ENCODE measurements at regions of chr1 and their contacts with region 1.

Region 1: GRCh38 chr1:170967042-170967910 is 31.9 kb downstream of the MROH9 start:
- DNase-seq: peak; percentile 23
- H3K4me3 ChIP-seq: no peak overlapping the region
- H3K27ac ChIP-seq: no peak overlapping the region
- H3K27me3 ChIP-seq: no peaks in the 10 kb centered on the region
- CTCF ChIP-seq: peak; percentile 72

Region 2: DNA sequence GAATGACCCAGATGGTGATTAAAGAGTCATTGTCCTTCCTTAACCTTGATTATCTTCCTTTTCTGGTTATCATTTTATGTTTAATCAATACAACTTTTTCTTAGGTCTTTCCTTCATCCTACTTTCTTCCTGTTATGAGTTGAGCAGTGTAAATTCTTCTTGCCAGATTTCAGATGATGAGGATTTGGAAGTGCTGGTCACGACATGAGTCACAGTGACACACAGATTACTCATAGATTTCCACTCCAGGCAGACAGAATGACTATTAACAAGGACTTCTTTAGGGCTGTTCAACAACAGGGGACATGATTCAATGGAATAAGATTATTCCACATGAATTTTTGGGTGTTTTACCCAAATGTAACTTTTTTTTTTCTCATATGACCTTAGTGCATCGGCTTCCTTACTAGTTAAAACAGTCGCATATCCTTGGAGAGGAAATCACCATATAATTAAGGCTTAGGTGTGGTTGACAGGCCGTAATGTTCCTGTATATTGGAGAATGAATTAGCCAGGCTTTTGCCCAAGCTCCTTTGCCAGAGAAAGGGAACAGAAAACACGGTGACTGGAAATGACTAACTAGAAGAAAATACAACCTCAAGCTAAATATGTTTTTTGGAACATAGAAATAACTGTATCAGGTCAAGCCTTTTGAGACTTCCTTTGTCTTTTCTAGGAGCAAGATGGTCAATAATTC is 259.2 kb before region 1 on chr1:
- CTCF ChIA-PET with region 1: no interaction called
- POLR2A ChIA-PET with region 1: no interaction called
- DNase-seq: peak; percentile 78
- H3K4me3 ChIP-seq: no peak overlapping the region
- H3K27ac ChIP-seq: peak overlapping the region; percentile 62
- H3K27me3 ChIP-seq: no peaks in the 10 kb centered on the region
- CTCF ChIP-seq: no peak

Region 3: GRCh38 chr1:170917373-170917772 is 49.9 kb before region 1 on chr1:
- CTCF ChIA-PET with region 1: no interaction called
- POLR2A ChIA-PET with region 1: no interaction called
- DNase-seq: no peak
- H3K4me3 ChIP-seq: no peak overlapping the region
- H3K27ac ChIP-seq: no peak overlapping the region
- H3K27me3 ChIP-seq: no peaks in the 10 kb centered on the region
- CTCF ChIP-seq: no peak

Region 4: DNA sequence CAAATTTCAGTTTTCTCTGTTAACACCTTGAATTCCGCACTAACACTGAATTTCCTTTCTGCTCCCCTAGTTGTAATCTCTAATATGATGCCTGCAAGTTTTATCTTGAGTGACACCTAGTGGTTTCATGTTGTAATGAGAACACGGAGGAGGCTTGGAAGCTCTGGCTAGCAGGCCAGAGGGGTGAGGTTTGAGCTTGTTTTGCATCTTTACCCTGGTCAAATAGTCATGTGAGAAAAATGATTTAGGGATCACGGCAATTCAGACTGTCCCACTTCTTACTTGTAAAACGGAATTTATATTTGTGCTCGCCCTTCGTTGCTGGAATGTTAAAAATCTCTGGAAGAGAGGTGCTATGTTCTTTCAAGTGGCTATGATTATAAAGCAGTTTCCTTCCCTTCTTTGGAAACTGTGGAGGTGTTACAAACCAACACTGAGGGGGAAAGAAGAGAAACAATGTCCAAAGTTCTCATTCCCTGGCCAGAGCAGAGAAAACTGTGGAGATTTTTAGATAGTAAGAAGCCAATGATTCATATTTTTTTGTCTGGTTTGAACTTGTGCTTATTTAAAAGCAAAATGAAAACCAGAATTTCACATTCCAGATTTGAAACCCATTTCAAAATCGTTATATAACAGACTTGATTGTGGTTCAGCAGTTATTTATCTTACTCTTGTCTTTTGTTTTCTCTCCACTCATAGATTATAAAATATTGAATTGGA is 37.3 kb before region 1 on chr1:
- CTCF ChIA-PET with region 1: interaction called, 11 read pairs
- POLR2A ChIA-PET with region 1: no interaction called
- DNase-seq: peak; percentile 33
- H3K4me3 ChIP-seq: no peak overlapping the region
- H3K27ac ChIP-seq: no peak overlapping the region
- H3K27me3 ChIP-seq: no peaks in the 10 kb centered on the region
- CTCF ChIP-seq: peak; percentile 75

Region 5: GRCh38 chr1:170935231-170935630 is 32.0 kb before region 1 on chr1 and contains the start of gene MROH9:
- CTCF ChIA-PET with region 1: interaction called, 12 read pairs
- POLR2A ChIA-PET with region 1: no interaction called
- DNase-seq: no peak
- H3K4me3 ChIP-seq: no peak within 1 kb of the TSS
- H3K27ac ChIP-seq: no peak within 1 kb of the TSS
- H3K27me3 ChIP-seq: no peaks in the 10 kb centered on the region
- CTCF ChIP-seq: no peak
- polyA plus RNA-seq, gene MROH9: not detected in 2 replicates

Region 6: DNA sequence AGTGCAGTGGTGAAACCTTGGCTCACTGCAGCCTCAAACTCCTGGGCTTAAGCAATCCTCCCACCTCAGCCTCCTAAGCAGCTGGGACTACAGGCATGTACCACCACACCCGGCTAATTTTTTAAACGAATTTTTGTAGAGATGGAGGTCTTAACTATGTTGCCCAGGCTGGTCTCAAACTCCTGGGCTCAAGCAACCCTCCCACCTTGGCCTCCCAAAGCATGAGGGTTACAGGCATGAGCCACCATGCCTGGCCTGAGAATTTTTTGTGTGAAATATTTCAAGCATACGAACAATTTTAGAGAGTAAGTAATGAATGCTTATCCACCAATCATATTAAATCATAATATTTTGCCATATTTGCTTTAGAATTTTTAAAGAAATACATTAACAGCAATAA is 19.6 kb after region 1 on chr1:
- CTCF ChIA-PET with region 1: interaction called, 13 read pairs
- POLR2A ChIA-PET with region 1: no interaction called
- DNase-seq: no peak
- H3K4me3 ChIP-seq: no peak overlapping the region
- H3K27ac ChIP-seq: no peak overlapping the region
- H3K27me3 ChIP-seq: peaks cover 2% of the 10 kb centered on the region
- CTCF ChIP-seq: no peak

Region 7: DNA sequence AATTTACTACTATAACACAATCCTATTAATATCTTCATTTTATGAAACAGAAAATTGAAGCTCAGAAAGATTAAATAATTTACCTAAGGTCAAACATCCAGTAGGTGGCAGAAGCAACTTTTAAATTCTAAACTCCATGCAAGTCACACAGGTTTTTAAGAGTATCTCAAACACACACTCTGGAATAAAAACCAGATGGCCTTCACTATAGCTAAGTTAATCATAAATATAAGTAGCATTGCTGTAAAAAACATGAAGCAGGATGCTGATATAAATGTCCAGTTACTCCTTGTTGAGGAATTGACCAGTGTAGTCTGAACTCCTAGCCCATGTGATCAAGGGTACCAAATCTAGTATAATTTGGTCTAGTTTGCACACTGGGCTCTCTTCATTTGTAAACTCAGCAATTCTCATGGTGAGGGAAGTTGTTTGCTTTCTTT is 114.1 kb after region 1 on chr1:
- CTCF ChIA-PET with region 1: interaction called, 23 read pairs
- POLR2A ChIA-PET with region 1: no interaction called
- DNase-seq: peak; percentile 33
- H3K4me3 ChIP-seq: no peak overlapping the region
- H3K27ac ChIP-seq: no peak overlapping the region
- H3K27me3 ChIP-seq: no peaks in the 10 kb centered on the region
- CTCF ChIP-seq: peak; percentile 55

Region 8: DNA sequence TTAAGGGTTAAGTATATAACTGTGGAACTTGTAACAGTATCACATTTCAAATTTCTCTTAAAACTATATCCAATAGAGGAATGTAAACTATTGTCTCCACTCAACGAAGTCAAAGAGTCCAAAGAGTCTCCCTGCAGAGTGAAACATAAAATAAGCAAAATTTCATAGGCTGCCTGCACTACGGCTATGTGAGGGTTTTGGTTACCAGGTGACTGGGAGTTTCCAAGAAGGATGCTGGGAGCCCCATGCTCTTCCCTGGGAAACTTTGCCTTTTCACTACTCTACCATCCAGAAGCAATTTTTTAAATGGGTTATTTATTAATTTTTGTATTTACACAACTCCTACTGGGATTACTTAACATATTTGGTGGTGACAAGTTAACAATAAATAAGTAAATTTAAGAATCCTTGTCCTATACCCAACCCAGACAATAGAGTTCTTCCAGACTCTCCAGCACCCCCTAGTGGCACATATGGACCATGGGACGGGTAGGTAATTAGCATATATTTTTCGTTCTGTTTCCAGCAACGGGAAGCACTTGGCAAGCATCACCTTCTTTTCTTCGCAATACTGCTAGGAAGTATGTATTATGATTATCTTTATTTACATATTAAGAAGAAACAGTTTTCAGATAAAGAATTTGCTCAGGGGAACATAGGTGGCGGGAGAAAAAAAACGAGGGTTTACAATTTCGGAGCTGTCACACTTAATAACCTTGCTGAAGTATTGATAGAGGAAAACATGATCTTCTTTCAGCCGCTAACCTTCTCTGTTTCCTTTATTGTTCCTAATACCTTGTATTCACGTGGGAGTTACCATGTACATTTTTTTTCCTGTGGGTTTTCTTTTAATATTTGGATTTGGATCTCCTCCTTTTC is 221.4 kb after region 1 on chr1:
- CTCF ChIA-PET with region 1: interaction called, 13 read pairs
- POLR2A ChIA-PET with region 1: no interaction called
- DNase-seq: peak; percentile 20
- H3K4me3 ChIP-seq: no peak overlapping the region
- H3K27ac ChIP-seq: no peak overlapping the region
- H3K27me3 ChIP-seq: no peaks in the 10 kb centered on the region
- CTCF ChIP-seq: peak; percentile 77

Region 9: DNA sequence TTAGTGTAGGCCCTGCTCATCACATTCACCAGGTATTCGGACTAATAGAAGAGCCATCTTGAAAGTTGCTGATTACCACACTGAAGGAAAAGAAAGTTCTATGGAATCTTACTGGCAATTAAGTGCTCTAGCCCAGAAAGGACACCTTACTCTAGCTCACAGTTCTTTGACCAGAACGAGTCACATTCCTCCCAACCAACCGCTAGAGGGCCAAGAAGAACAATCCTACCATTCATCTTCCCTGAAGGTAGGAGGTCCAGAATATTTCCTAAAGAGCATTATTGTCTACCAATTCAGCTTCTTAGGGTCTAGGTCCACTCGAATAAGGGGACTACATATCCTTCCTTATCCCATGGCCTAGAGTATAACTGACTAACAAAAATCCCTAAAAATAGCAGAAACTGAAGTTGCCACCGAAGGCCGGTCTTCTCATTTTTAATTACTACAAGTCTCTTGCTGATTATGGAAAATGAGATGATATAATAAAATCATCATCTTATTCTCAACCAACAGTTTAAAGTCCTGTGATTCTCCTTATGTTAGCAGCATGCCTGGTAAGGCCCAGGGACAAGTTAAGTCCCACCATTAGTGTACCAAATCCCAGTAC is 278.3 kb after region 1 on chr1:
- CTCF ChIA-PET with region 1: interaction called, 28 read pairs
- POLR2A ChIA-PET with region 1: no interaction called
- DNase-seq: no peak
- H3K4me3 ChIP-seq: no peak overlapping the region
- H3K27ac ChIP-seq: no peak overlapping the region
- H3K27me3 ChIP-seq: no peaks in the 10 kb centered on the region
- CTCF ChIP-seq: peak; percentile 82